RWPE1 (cell line): ENCODE measurements at regions of chr12 and their contacts with region 1.

Region 1: GRCh38 chr12:51531978-51532497 is 59.0 kb upstream of the SCN8A start:
- DNase-seq: peak; percentile 79
- H3K27ac ChIP-seq: no peak overlapping the region
- CTCF ChIP-seq: peak; percentile 87

Region 2: GRCh38 chr12:51441583-51441982 is 90.5 kb before region 1 on chr12:
- CTCF ChIA-PET with region 1: no interaction called
- POLR2A ChIA-PET with region 1: no interaction called
- DNase-seq: no peak
- H3K27ac ChIP-seq: no peak overlapping the region
- CTCF ChIP-seq: no peak

Region 3: DNA sequence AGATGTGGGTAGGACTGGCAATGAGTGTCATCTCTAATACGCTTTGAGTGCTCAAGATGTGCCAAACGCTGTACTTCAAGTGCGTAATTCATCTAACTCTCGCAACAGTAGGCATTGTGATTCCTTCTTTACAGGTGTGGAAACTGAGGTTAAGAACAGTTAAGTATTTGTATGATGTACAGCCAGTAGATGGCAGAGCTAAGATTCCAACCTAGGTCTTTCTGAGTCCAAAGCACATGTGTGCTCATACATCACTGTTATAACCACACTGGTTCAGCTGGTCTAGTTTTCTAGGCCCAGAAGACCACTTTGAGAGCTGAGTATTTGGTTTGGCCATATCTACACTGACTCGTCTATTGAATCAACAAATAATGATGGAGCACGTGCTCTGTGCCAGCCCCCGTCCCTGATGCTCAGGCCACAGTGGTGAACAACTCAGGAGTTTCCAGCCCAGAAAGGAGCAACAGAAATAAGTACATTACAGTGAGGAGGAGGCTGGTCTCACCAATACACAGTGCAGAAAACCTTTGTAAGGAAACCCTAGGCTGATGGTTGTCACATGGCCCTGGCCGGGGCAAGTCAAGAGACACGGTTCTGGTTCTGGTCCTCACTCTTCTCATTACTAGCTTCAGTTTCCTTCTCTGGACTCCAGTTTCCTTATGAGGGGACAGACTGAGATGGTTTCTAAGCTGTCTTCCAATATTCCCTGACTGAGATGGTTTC is 10.3 kb before region 1 on chr12:
- CTCF ChIA-PET with region 1: interaction called, 15 read pairs
- POLR2A ChIA-PET with region 1: no interaction called
- DNase-seq: no peak
- H3K27ac ChIP-seq: no peak overlapping the region
- CTCF ChIP-seq: no peak

Region 4: DNA sequence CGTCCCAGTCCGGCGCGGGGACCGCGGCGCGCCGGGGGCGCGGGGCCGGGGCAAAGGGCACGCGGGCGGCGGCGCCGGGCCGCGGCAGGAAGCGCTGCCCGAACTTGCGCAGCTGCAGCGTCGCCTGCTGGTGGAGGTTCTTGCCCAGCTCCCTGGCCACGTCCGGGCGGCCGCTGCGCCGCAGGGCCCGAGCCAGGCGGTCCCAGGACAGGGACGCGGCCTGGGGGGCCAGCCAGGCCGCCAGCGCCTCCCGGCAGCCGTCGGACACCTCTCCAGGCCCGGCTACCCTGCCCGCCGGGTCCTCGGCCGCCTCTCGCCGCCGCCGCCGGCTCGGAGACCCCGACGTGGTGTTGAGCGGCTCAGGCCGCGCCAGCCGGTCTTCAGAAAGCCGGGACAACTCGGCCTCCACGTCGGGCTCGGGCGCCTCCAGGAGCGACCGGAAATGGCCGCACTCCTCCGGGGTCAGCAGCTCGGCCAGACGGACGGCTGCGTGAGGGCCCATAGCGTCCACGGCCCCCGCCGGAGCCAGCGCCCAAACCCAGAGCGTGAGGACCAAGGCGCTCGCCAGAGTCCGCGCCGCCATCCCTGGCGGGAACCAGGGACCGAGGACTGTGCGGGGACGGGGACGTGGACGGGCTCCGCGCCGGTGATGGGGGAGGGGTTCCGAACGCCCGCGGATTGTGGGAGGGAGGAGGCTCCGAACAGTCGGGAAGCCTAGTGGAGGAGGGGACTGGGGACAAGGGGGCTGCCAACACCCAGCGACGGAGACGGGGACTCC is 282.5 kb after region 1 on chr12:
- CTCF ChIA-PET with region 1: interaction called, 13 read pairs
- POLR2A ChIA-PET with region 1: no interaction called
- DNase-seq: peak; percentile 56
- H3K27ac ChIP-seq: no peak overlapping the region
- CTCF ChIP-seq: peak; percentile 66